ENCODE measurements at regions of chr15 and their contacts with region 1.

Region 1: GRCh38 chr15:27438403-27439375 is 467.7 kb downstream of the GABRG3 start:
- DNase-seq: peak in 9 of 10 donors; percentile 23 to 84 (median 68)
- H3K4me3 ChIP-seq: no peak overlapping the region
- H3K27ac ChIP-seq: peak overlapping the region in 37 of 59 donors; percentile 4 to 80 (median 55)
- H3K27me3 ChIP-seq: no peaks in the 10 kb centered on the region
- CTCF ChIP-seq: no peak

Region 2: DNA sequence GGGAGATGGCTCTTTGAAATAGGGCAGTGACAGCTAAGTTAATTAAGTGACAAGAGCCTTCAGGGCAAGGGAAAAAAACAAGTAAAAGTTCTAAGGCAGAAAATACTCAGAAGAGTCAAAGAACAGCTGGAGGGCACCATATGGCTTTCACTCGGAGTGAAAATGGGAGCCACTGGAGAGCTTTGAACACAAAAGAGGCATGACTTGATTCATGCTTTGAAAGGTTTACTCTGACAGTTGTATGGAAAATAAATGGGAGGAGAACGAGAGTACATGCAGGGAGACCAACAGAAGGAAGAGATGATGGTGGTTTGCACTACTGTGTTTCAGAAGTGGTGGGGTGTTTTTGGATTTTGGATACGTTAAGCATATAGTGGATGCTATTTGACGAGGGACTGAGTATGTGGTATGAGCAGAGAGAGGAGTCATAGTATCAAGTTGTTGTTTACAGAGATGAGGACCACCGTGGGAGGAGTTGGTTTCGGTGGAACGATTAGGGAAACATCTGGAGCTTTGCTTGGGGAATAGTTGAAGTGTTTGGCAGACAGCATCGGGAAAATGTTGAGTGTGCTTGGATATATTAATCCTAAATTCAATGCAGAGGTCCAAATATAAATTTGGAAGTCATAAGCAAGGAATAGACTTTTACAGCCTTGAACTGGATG is 56.2 kb before region 1 on chr15:
- intact Hi-C with region 1: loop called in 1 of 2 experiments (anchors 10 kb)
- DNase-seq: no peak
- H3K4me3 ChIP-seq: no peak overlapping the region
- H3K27ac ChIP-seq: no peak overlapping the region
- H3K27me3 ChIP-seq: no peaks in the 10 kb centered on the region
- CTCF ChIP-seq: no peak

Region 3: GRCh38 chr15:27587810-27588209 is 149.1 kb after region 1 on chr15:
- intact Hi-C with region 1: no loop called
- DNase-seq: no peak
- H3K4me3 ChIP-seq: no peak overlapping the region
- H3K27ac ChIP-seq: no peak overlapping the region
- H3K27me3 ChIP-seq: peaks cover 0 to 6% (median 0%) of the 10 kb centered on the region in 45 donors
- CTCF ChIP-seq: no peak